Heart left ventricle (tissue), 16 donors: ENCODE measurements at regions of chr1 and their contacts with region 1.

Region 1: GRCh38 chr1:66464802-66465201 is 69.2 kb upstream of the SGIP1 start:
- DNase-seq: no peak
- ATAC-seq: no peak
- H3K4me3 ChIP-seq: no peak overlapping the region
- H3K27ac ChIP-seq: no peak overlapping the region
- H3K4me1 ChIP-seq: peaks cover 0 to 6% (median 0%) of the 10 kb centered on the region in 12 donors
- H3K27me3 ChIP-seq: no peaks in the 10 kb centered on the region
- CTCF ChIP-seq: no peak
- POLR2A ChIP-seq: no peak

Region 2: DNA sequence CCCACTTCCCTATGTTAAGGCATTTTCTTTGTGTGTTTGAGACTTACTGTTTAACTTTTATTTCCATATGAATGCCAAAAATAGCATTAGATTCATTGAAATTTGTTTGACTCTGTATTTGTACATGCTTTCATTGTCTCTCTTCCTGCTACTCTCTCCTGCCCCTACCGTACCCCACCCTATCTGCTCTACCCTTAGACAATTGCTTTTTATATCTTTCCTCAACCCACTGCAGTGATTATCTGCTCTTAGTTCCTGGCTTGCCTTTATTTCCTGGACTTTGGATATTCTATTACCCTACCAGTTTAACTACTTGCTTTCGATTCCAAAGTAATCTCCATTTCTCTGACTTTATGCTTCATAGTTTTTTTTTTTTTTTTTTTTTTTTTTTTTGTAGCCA is 1709.4 kb before region 1 on chr1:
- intact Hi-C with region 1: no loop called
- DNase-seq: peak in 1 of 5 donors; percentile 10
- ATAC-seq: peak; percentile 81 to 93 (median 86)
- H3K4me3 ChIP-seq: peak overlapping the region in 1 of 12 donors; percentile 8
- H3K27ac ChIP-seq: peak overlapping the region in 9 of 12 donors; percentile 5 to 68 (median 49)
- H3K4me1 ChIP-seq: peaks cover 0 to 36% (median 27%) of the 10 kb centered on the region in 12 donors
- H3K27me3 ChIP-seq: no peaks in the 10 kb centered on the region
- CTCF ChIP-seq: peak in 1 of 12 donors; percentile 14
- POLR2A ChIP-seq: no peak

Region 3: GRCh38 chr1:66732407-66733166 is 267.8 kb after region 1 on chr1:
- intact Hi-C with region 1: loop called in 1 of 10 experiments (anchors 10 kb)
- DNase-seq: no peak
- ATAC-seq: peak in 1 of 4 donors; percentile 27
- H3K4me3 ChIP-seq: no peak overlapping the region
- H3K27ac ChIP-seq: peak overlapping the region in 1 of 12 donors; percentile 71
- H3K4me1 ChIP-seq: peaks cover 0 to 25% (median 0%) of the 10 kb centered on the region in 12 donors
- H3K27me3 ChIP-seq: no peaks in the 10 kb centered on the region
- CTCF ChIP-seq: no peak
- POLR2A ChIP-seq: no peak

Region 4: GRCh38 chr1:67674260-67675011 is 1209.6 kb after region 1 on chr1:
- intact Hi-C with region 1: no loop called
- DNase-seq: peak in 4 of 5 donors; percentile 36 to 60 (median 42)
- ATAC-seq: peak; percentile 61 to 96 (median 70)
- H3K4me3 ChIP-seq: no peak overlapping the region
- H3K27ac ChIP-seq: peak overlapping the region in 9 of 12 donors; percentile 5 to 49 (median 31)
- H3K4me1 ChIP-seq: peaks cover 0 to 17% (median 10%) of the 10 kb centered on the region in 12 donors
- H3K27me3 ChIP-seq: no peaks in the 10 kb centered on the region
- CTCF ChIP-seq: no peak
- POLR2A ChIP-seq: no peak